ENCODE measurements at regions of chr5 and their contacts with region 1.

Region 1: DNA sequence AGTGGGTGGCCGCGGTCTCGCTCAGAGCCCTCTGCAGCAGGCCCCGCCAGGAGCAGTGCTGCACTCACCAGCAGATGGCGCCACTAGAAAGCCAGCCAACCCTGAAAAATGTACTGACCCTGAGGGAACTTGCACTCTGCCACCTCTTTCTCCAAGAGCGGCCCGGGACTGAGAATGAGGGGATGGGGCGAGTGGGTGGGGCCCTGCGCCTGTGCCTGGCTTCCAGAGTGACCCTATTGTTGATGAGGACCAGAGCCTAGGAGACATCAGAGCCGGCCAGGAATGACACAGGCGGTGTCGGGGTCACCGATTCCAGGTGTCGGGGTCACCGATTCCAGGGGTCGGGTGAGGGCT is 2.9 kb upstream of the IL17B start:
- DNase-seq: peak; percentile 45 to 82 (median 71)
- ATAC-seq: peak; percentile 61
- H3K4me3 ChIP-seq: no peak overlapping the region
- H3K4me3 Mint-ChIP-seq: no peak overlapping the region
- H3K27ac ChIP-seq: no peak overlapping the region
- H3K27ac Mint-ChIP-seq: no peak overlapping the region
- H3K4me1 ChIP-seq: peaks cover 3% of the 10 kb centered on the region
- H3K4me1 Mint-ChIP-seq: peaks cover 4% of the 10 kb centered on the region
- H3K27me3 ChIP-seq: peaks cover 0 to 2% of the 10 kb centered on the region in 2 experiments
- H3K27me3 Mint-ChIP-seq: peaks cover 2% of the 10 kb centered on the region
- CTCF ChIP-seq: peak; percentile 77

Region 2: DNA sequence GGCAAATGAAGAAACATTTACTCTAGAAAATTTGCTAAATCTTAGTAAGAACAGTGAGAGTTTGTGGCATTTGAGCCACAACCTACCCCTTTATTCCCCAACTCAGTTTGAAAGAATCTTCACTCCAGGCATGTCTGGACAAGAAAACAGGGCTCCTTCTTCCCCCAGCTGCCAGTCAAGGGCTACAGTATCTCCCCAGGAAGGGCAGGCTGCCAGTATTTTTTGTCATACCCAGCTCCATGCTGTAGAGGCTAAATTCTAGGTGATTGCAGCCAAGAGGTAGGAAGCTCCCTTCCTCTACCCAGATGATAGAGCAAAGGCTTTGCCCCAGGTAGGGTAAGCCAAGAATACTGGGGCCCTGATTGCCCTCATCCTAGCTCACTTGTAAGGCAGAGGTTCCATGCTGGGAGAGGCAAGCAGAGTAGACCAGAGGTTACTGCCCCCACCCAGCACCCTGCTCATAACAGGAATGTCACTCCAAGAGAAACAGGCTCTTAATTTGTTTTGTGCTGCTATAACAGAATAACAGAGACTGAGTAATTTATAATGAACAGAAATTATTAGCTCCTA is 56.7 kb before region 1 on chr5:
- CTCF ChIA-PET with region 1: interaction called, 541 read pairs
- POLR2A ChIA-PET with region 1: no interaction called
- intact Hi-C with region 1: no loop called
- DNase-seq: no peak
- ATAC-seq: no peak
- H3K4me3 ChIP-seq: no peak overlapping the region
- H3K4me3 Mint-ChIP-seq: no peak overlapping the region
- H3K27ac ChIP-seq: no peak overlapping the region
- H3K27ac Mint-ChIP-seq: no peak overlapping the region
- H3K4me1 ChIP-seq: no peaks in the 10 kb centered on the region
- H3K4me1 Mint-ChIP-seq: no peaks in the 10 kb centered on the region
- H3K27me3 ChIP-seq: no peaks in the 10 kb centered on the region
- H3K27me3 Mint-ChIP-seq: no peaks in the 10 kb centered on the region
- CTCF ChIP-seq: no peak

Region 3: DNA sequence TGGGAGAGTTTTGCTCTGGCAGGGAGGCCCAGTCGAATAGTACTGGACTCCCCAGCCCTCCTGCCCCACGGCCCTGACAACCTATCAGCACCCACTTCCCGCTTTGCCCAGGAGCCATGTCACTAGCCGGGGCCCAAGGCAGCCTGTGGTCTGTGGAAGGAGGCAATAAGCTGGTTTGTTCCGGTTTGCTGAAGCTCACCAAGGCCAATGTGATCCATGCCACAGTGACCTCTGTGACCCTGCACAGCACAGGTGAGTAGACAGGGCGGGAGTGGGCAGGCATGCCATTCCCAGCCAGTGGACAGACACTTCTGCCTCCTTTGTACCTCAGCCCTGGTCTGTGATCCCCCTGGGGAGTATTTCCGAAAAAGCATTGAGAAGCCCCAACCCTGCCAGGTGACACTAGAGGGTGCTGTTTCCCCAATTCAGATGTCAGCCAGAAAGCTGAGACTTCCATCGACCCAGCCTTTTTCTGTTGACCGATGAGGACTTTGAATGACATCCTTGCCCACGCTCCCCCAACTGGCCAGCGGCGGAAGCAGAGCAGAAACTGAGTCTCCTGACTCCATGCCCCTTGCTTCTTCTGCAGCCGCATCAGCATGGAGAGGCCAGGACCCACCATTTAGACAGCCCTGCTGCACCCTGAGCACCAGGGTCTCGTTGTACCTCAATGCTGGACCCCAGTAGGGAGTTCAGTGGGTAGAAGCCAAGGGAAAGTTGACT is 14.6 kb before region 1 on chr5:
- CTCF ChIA-PET with region 1: interaction called, 52 read pairs
- POLR2A ChIA-PET with region 1: interaction called, 3 read pairs
- intact Hi-C with region 1: no loop called
- DNase-seq: peak; percentile 31 to 70 (median 59)
- ATAC-seq: peak; percentile 67
- H3K4me3 ChIP-seq: no peak overlapping the region
- H3K4me3 Mint-ChIP-seq: no peak overlapping the region
- H3K27ac ChIP-seq: no peak overlapping the region
- H3K27ac Mint-ChIP-seq: peak overlapping the region; percentile 41
- H3K4me1 ChIP-seq: peaks cover 8% of the 10 kb centered on the region
- H3K4me1 Mint-ChIP-seq: peaks cover 24% of the 10 kb centered on the region
- H3K27me3 ChIP-seq: no peaks in the 10 kb centered on the region
- H3K27me3 Mint-ChIP-seq: no peaks in the 10 kb centered on the region
- CTCF ChIP-seq: peak; percentile 57

Region 4: DNA sequence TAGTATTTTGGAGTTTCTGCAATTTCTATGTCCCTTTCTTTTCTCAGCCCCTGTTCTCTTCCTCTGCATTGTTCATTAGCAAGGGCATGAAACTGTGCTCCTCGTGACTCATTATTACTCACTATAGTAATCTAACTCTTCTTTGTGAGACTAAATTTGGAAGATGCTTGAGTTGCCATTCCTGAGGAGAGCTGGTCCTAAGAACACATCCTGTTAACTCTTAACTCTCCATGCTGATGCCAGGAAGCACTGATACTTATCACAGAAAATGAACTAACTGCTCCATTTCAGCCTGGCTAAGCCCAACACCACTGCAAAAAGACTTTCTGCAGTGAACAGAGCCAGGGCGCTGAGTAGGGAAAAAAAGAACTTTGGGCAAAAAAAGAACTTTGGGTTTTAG is 179.9 kb after region 1 on chr5:
- CTCF ChIA-PET with region 1: interaction called, 42 read pairs
- POLR2A ChIA-PET with region 1: no interaction called
- intact Hi-C with region 1: loop called (anchors 1 kb)
- DNase-seq: no peak
- ATAC-seq: no peak
- H3K4me3 ChIP-seq: no peak overlapping the region
- H3K4me3 Mint-ChIP-seq: no peak overlapping the region
- H3K27ac ChIP-seq: no peak overlapping the region
- H3K27ac Mint-ChIP-seq: no peak overlapping the region
- H3K4me1 ChIP-seq: peaks cover 4% of the 10 kb centered on the region
- H3K4me1 Mint-ChIP-seq: peaks cover 17% of the 10 kb centered on the region
- H3K27me3 ChIP-seq: no peaks in the 10 kb centered on the region
- H3K27me3 Mint-ChIP-seq: no peaks in the 10 kb centered on the region
- CTCF ChIP-seq: no peak

Region 5: DNA sequence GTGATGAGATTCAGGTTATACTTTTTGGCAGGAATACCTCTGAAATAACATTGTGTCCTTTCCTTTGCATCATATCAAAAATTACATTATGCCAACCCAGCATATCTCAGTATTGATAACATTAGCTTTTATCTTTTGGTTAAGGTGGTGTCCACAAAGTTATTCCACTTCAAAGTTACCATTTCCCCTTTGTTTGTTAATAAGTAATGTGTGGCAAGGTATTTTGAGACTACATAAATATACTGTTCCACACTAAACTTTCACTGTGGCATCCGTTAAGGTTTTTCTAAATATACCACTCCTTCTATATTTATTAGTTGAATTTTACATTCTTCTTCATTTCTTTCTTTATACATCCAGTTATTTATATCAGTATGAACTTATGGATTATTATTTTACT is 185.3 kb after region 1 on chr5:
- CTCF ChIA-PET with region 1: interaction called, 42 read pairs
- POLR2A ChIA-PET with region 1: no interaction called
- intact Hi-C with region 1: loop called (anchors 1 kb)
- DNase-seq: no peak
- ATAC-seq: no peak
- H3K4me3 ChIP-seq: no peak overlapping the region
- H3K4me3 Mint-ChIP-seq: no peak overlapping the region
- H3K27ac ChIP-seq: no peak overlapping the region
- H3K27ac Mint-ChIP-seq: no peak overlapping the region
- H3K4me1 ChIP-seq: no peaks in the 10 kb centered on the region
- H3K4me1 Mint-ChIP-seq: peaks cover 9% of the 10 kb centered on the region
- H3K27me3 ChIP-seq: no peaks in the 10 kb centered on the region
- H3K27me3 Mint-ChIP-seq: no peaks in the 10 kb centered on the region
- CTCF ChIP-seq: no peak